ENCODE measurements at regions of chrX and their contacts with region 1.

Region 1: GRCh38 chrX:136065044-136065671 is 79.9 kb downstream of the SLC9A6 start:
- DNase-seq: no peak

Region 2: GRCh38 chrX:136115126-136115903 is 50.2 kb after region 1 on chrX:
- intact Hi-C with region 1: loop called in 1 of 2 experiments (anchors 10 kb)
- DNase-seq: no peak